GM12878 (cell line): ENCODE measurements at regions of chr19 and their contacts with region 1.

Region 1: GRCh38 chr19:9796113-9796773 is 22.6 kb downstream of the FBXL12 start:
- DNase-seq: peak; percentile 66
- ATAC-seq: peak; percentile 91
- H3K4me3 ChIP-seq: no peak overlapping the region
- H3K27ac ChIP-seq: no peak overlapping the region
- H3K4me1 ChIP-seq: no peaks in the 10 kb centered on the region
- H3K27me3 ChIP-seq: no peaks in the 10 kb centered on the region
- CTCF ChIP-seq: peak; percentile 79 to 94 (median 86)
- EP300 ChIP-seq: no peak
- POLR2A ChIP-seq: no peak
- RAD21 ChIP-seq: peak; percentile 90

Region 2: DNA sequence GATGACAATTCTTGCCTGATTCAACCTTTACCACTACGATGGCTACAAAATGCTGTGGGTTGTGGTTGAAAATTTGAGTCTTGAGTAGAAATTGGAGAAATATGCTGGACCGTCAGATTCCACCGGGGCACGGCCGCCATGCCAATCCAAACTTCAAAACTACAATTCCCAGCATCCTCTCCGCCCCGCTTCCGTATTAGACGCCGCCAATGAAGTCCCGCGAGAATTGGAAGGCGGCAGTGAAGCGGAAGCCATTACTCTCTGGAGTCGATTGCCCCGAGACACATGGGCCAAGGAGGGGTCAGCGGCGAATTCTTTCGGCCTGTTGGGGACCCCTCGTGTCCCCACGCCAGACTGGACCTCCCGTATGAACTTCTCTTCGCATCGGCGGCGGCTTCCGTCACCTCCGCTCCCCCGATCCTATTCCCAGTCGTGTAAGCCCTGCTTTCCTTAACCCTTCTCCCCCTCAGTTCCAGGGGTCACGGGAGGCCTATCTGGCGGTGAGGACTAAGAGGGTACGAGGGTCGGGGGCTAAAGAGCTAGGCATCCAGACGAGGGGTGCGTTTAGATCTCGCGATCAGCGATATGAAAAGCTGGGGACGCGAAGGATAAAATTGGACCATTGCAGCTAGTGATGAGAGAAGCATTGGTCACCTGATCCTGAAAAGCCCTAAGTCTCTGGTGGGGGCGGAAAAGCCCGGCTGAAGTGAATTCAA is 655.9 kb before region 1 on chr19 and contains the start of gene ZNF317:
- CTCF ChIA-PET with region 1: no interaction called
- POLR2A ChIA-PET with region 1: no interaction called
- RAD21 ChIA-PET with region 1: no interaction called
- SMC1A ChIA-PET with region 1: no interaction called
- in situ Hi-C with region 1: loop called (anchors 5 kb)
- intact Hi-C with region 1: loop called (anchors 2 kb)
- DNase-seq: peak; percentile 66
- ATAC-seq: peak; percentile 98
- H3K4me3 ChIP-seq: peak within 1 kb of the TSS; percentile 97
- H3K27ac ChIP-seq: peak within 1 kb of the TSS; percentile 94
- H3K4me1 ChIP-seq: no peaks in the 10 kb centered on the region
- H3K27me3 ChIP-seq: no peaks in the 10 kb centered on the region
- CTCF ChIP-seq: no peak
- EP300 ChIP-seq: no peak
- POLR2A ChIP-seq: peak; percentile 96
- RAD21 ChIP-seq: no peak
- polyA plus RNA-seq, gene ZNF317: 25.0 to 37.5 TPM

Region 3: DNA sequence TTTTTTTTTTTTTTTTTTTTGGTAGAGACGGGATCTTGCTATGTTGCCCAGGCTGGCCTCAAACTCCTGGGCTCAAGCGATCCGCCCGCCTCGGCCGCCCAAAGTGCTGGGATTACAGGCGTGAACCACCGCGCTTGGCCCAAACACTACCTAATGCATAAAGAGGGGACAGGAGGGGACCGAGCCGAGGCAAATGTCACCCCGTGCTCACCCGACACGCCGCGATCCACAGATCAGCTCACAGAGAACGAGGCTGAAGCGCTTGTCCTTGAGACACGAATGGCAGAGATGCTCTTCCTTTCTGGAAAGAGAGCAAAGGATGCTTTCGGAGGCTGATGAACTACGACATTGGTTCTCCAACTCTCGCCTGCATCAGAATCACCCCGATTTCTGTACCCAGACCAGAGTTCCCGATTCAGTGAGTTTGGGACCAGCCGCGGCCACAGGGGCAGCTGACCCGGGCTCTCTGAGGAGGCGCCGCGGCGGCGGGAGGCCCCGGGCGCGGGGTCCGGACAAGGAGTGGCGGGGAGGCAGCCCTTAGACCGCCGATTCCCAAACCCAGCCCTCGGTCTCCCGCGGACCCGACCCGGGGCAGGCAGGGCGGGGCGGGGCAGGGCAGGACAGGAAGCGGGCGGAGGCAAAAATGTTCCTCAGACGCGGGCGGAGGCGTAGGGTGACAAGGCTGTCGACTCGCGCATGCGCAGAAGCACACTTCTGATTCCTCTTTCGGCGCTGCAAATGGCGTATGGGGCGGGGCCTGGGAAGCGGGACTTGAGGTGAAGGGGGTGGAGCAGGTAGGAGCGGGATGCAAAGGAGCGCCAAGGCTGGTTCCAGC is 486.9 kb before region 1 on chr19 and contains the start of gene ZNF699:
- CTCF ChIA-PET with region 1: interaction called, 5 read pairs
- POLR2A ChIA-PET with region 1: no interaction called
- RAD21 ChIA-PET with region 1: no interaction called
- SMC1A ChIA-PET with region 1: interaction called, 3 read pairs
- in situ Hi-C with region 1: no loop called
- intact Hi-C with region 1: loop called (anchors 5 kb)
- DNase-seq: peak; percentile 91
- ATAC-seq: peak; percentile 96
- H3K4me3 ChIP-seq: peak within 1 kb of the TSS; percentile 77
- H3K27ac ChIP-seq: peak within 1 kb of the TSS; percentile 88
- H3K4me1 ChIP-seq: no peaks in the 10 kb centered on the region
- H3K27me3 ChIP-seq: no peaks in the 10 kb centered on the region
- CTCF ChIP-seq: no peak
- EP300 ChIP-seq: no peak
- POLR2A ChIP-seq: peak; percentile 87
- RAD21 ChIP-seq: no peak
- polyA plus RNA-seq, gene ZNF699: 0.04 to 0.31 TPM

Region 4: DNA sequence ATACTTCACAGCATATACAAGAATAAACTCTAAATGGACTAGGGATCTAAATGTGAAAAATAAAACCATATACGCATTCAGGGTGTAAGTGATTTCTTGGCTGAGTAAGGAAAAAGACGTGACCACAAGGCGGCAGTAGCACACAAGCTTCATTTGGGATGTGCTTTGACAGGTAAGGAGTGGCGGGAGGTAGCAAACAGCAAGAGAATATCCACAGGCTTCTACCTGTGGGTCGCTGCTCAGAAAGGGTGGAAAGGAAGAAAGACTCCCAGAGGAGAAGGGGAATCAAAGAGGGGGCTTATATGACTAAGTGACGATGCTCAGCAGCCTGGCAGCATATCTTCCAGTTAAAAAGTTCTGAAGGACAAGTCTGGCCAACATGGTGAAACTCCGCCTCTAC is 209.5 kb before region 1 on chr19:
- CTCF ChIA-PET with region 1: interaction called, 6 read pairs
- POLR2A ChIA-PET with region 1: no interaction called
- RAD21 ChIA-PET with region 1: interaction called, 7 read pairs
- SMC1A ChIA-PET with region 1: no interaction called
- in situ Hi-C with region 1: loop called (anchors 5 kb)
- intact Hi-C with region 1: loop called (anchors 1 kb)
- DNase-seq: peak; percentile 24
- ATAC-seq: peak; percentile 34; the same call in 2 of the 3 replicates
- H3K4me3 ChIP-seq: no peak overlapping the region
- H3K27ac ChIP-seq: no peak overlapping the region
- H3K4me1 ChIP-seq: no peaks in the 10 kb centered on the region
- H3K27me3 ChIP-seq: no peaks in the 10 kb centered on the region
- CTCF ChIP-seq: peak; percentile 61 to 70 (median 66)
- EP300 ChIP-seq: no peak
- POLR2A ChIP-seq: no peak
- RAD21 ChIP-seq: peak; percentile 81

Region 5: GRCh38 chr19:9752701-9753443 is 43.4 kb before region 1 on chr19:
- CTCF ChIA-PET with region 1: no interaction called
- POLR2A ChIA-PET with region 1: no interaction called
- RAD21 ChIA-PET with region 1: no interaction called
- SMC1A ChIA-PET with region 1: no interaction called
- in situ Hi-C with region 1: no loop called
- intact Hi-C with region 1: no loop called
- DNase-seq: no peak
- ATAC-seq: no peak
- H3K4me3 ChIP-seq: no peak overlapping the region
- H3K27ac ChIP-seq: no peak overlapping the region
- H3K4me1 ChIP-seq: no peaks in the 10 kb centered on the region
- H3K27me3 ChIP-seq: no peaks in the 10 kb centered on the region
- CTCF ChIP-seq: no peak
- EP300 ChIP-seq: no peak
- POLR2A ChIP-seq: no peak
- RAD21 ChIP-seq: no peak